CD4-positive, alpha-beta T cell (primary cell): ENCODE measurements at regions of chr9 and their contacts with region 1.

Region 1: GRCh38 chr9:98306384-98307160 is 51.1 kb upstream of the TBC1D2 start:
- DNase-seq: no peak
- ATAC-seq: no peak
- H3K4me3 ChIP-seq: no peak overlapping the region
- H3K4me3 Mint-ChIP-seq: no peak overlapping the region
- H3K27ac ChIP-seq: no peak overlapping the region
- H3K27ac Mint-ChIP-seq: no peak overlapping the region
- H3K4me1 ChIP-seq: no peaks in the 10 kb centered on the region
- H3K4me1 Mint-ChIP-seq: no peaks in the 10 kb centered on the region
- H3K27me3 ChIP-seq: peaks cover 0 to under 1% of the 10 kb centered on the region in 2 experiments
- H3K27me3 Mint-ChIP-seq: no peaks in the 10 kb centered on the region
- CTCF ChIP-seq: no peak

Region 2: DNA sequence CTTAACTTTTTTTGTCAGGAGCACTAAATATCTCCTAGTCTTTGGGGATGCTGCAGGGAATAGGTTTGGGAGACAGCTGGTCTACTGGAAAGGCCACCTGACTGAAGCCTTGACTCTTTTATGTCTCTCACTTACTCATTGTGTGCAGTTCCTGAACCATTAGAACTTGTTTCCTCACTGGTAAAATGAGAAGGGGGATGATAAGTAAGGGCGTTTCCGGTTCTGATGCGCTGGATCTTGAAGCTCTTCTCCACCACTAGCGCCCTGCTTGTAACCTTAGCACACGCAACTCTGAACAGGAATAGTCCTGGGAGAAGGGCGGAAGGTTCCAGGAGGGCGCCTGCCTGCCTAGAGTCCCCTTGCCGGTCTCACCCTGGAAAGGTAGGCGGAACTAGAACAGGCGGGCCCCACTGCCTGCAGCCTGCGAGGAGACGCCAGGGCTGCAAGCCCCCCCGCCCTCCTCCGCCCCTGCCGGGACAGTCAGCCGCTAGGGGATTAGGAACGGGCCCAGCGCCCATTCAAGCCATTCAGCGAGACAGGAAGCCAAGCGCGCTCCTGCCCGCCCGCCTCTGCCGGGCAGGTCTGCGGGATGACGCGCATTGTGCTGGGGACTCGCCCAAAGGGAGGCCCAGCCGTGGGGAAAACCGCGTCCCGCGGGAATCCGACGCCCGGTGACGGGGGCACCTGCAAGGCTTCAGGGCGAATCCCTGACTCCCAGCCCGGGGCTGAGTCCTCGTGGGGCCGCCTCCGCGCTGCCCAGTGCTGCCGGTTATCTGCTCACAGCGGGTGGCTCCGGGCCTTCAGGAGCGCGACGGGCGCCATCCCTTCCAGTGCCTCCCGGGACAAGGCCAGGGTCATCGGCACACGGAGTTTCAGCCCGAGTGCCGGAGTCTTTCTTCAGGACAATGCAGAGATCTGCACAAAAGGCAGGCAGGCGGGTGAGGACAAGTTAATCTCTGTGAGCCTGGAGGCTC is 565.4 kb before region 1 on chr9:
- CTCF ChIA-PET with region 1: no interaction called
- POLR2A ChIA-PET with region 1: no interaction called
- intact Hi-C with region 1: loop called in 1 of 2 experiments (anchors 10 kb)
- DNase-seq: peak in 11 of 14 experiments; percentile 2 to 48 (median 9)
- ATAC-seq: peak; percentile 49
- H3K4me3 ChIP-seq: peak overlapping the region; percentile 30
- H3K4me3 Mint-ChIP-seq: peak overlapping the region; percentile 51
- H3K27ac ChIP-seq: no peak overlapping the region
- H3K27ac Mint-ChIP-seq: no peak overlapping the region
- H3K4me1 ChIP-seq: peaks cover 10% of the 10 kb centered on the region
- H3K4me1 Mint-ChIP-seq: peaks cover 6% of the 10 kb centered on the region
- H3K27me3 ChIP-seq: peaks cover 52 to 53% of the 10 kb centered on the region in 2 experiments
- H3K27me3 Mint-ChIP-seq: peaks cover 95% of the 10 kb centered on the region
- CTCF ChIP-seq: no peak